Activated naive CD4-positive, alpha-beta T cell treated with anti-CD3 and anti-CD28 coated beads, Interleukin-2, amount 10 ng/mL, durations not matched to agents 7 days and 5 days (primary cell): ENCODE measurements at regions of chr10 and their contacts with region 1.

Region 1: DNA sequence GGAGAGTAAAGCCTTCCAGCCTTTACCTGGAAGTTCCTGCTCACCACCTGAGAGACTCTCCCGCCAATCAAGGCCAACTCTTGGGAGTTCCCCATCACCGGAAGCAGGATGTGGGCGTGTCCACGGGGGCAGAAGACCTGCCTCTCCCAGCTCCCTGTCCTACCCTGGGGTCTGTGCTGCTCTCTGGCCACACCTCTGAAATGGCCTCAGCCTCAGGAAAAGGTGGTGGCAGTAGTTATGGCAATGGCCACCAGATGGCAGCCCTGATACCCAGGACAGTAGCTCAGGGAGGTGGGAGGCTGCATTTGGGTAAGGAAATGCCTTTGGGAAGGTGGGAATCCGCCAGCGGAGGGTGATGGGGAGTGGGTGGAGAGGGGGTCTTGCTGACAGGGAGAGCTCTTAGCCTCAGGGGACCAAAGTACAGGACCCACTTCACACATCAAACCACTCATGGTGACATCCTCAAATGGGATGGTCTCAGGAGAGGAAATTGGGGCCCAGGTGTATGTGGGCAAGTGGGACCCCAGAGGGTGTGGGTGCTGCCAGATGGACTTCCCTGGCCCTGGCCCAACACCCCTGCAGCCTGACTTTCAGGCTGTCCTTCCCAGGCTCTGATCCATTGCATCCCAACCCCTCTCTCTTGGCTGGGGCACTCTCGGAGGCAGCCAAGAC is 33.9 kb downstream of the KAZALD1 start:
- DNase-seq: peak; percentile 83
- H3K4me3 Mint-ChIP-seq: no peak overlapping the region
- H3K27ac Mint-ChIP-seq: peak overlapping the region; percentile 68
- H3K4me1 Mint-ChIP-seq: no peaks in the 10 kb centered on the region
- H3K27me3 Mint-ChIP-seq: peaks cover 82% of the 10 kb centered on the region

Region 2: GRCh38 chr10:101107771-101108170 is 12.1 kb after region 1 on chr10:
- CTCF ChIA-PET with region 1: interaction called, 16 read pairs
- DNase-seq: no peak
- H3K4me3 Mint-ChIP-seq: no peak overlapping the region
- H3K27ac Mint-ChIP-seq: no peak overlapping the region
- H3K4me1 Mint-ChIP-seq: no peaks in the 10 kb centered on the region
- H3K27me3 Mint-ChIP-seq: peaks cover 65% of the 10 kb centered on the region

Region 3: DNA sequence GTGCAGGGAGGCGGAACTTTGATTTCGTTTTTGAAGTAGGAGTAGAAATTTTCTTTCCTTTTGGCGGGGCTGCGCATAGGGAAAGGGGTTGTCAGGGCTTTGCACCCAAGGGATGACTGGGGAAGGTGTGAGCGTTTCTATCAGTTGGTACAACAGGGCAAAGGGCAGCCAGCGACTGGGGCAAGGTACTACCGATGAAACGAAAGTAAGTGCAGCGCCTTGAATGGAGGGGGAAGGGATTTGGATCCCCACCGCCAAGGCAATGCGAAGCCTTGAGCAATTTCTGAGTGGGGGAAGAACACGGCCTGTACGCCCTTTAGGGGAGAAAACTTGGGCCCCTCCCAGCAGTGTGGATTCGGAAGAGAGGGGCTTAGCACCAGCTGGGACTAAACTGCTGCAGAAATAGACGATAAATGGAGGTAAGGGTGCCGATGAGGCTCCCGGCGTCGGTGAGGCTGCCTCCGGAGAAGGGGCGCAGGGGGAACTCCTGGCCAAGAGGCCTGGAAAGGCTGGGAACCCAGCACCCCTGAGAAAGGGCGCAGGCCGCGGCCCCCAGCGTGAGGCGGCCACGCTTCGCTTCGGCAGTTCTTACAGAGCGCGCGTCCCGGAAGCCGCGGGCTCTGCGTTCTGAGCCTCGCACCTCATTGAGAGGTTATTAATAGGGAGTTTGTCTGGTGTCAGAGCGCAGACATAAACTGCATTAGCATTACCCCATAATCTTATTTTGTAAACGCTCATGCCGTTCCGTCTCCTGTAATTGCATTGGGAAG is 25.4 kb after region 1 on chr10:
- CTCF ChIA-PET with region 1: interaction called, 23 read pairs
- DNase-seq: peak; percentile 58
- H3K4me3 Mint-ChIP-seq: peak overlapping the region; percentile 86
- H3K27ac Mint-ChIP-seq: peak overlapping the region; percentile 71
- H3K4me1 Mint-ChIP-seq: peaks cover 28% of the 10 kb centered on the region
- H3K27me3 Mint-ChIP-seq: peaks cover 91% of the 10 kb centered on the region